ENCODE measurements at regions of chr11 and their contacts with region 1.

Region 1: GRCh38 chr11:121722431-121723245 is 269.9 kb upstream of the SORL1-AS1 start:
- DNase-seq: peak; percentile 76
- H3K4me3 ChIP-seq: peak overlapping the region; percentile 58
- H3K27ac ChIP-seq: peak overlapping the region; percentile 83
- H3K27me3 ChIP-seq: no peaks in the 10 kb centered on the region
- CTCF ChIP-seq: no peak

Region 2: DNA sequence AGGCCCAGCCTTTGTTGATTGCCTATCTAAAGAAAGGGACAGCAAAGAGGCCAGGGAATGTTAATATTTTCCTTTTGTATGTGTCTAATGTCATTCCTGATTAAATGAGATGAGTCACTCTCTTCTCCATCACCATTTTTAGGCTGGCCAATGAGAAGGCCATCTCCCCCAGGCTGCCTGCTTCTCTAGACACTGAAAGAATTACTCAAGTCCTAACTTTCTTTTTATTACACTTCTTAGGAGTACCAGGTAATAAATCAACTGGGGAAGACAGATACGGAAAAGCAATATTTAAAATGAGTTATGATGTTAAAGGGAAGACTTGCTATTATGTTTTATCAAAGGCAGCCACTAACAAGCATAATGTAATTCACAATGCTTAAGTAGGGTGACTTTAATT is 10.7 kb before region 1 on chr11:
- CTCF ChIA-PET with region 1: no interaction called
- POLR2A ChIA-PET with region 1: no interaction called
- DNase-seq: no peak
- H3K4me3 ChIP-seq: no peak overlapping the region
- H3K27ac ChIP-seq: no peak overlapping the region
- H3K27me3 ChIP-seq: no peaks in the 10 kb centered on the region
- CTCF ChIP-seq: no peak

Region 3: DNA sequence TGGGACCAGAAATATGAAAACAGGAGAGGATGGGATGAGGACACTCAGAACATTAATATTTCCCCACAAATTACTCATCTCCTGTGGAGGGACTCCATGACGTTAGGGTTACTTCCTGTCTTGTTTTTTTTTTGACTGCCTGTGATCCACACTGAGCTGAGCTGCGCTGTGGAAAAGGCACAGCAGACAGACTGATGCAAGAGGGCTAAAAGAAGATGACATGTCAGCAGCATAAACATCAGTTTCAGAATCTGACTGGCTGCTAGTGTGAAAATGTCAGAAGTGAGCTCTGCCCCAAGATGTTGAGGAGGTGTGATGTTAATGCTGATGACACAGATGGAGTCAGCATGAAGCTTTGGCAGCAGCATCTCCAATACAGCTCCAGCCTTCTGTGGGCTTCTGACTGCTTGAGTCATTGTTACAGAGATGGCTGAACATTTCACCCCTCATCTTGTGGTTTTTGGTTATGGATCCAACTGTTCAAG is 106.6 kb after region 1 on chr11:
- CTCF ChIA-PET with region 1: no interaction called
- POLR2A ChIA-PET with region 1: interaction called, 10 read pairs
- DNase-seq: peak; percentile 96
- H3K4me3 ChIP-seq: peak overlapping the region; percentile 2
- H3K27ac ChIP-seq: peak overlapping the region; percentile 85
- H3K27me3 ChIP-seq: no peaks in the 10 kb centered on the region
- CTCF ChIP-seq: no peak

Measured in AG04450 (cell line).